ENCODE measurements at regions of chr3 and their contacts with region 1.

Region 1: GRCh38 chr3:56801662-56802377 is at the start of gene ARHGEF3:
- DNase-seq: peak; percentile 49 to 93
- H3K4me3 ChIP-seq: peak within 1 kb of the TSS; percentile 31 to 79 (median 76)
- H3K27ac ChIP-seq: no peak within 1 kb of the TSS
- H3K4me1 ChIP-seq: peaks cover 0 to 9% (median 3%) of the 10 kb centered on the region in 4 experiments; a peak in 4 of 7 replicates
- H3K27me3 ChIP-seq: peaks cover 0 to 11% (median 7%) of the 10 kb centered on the region in 4 experiments; a peak in 3 of 7 replicates
- CTCF ChIP-seq: peak; percentile 61 to 70 (median 66)
- EP300 ChIP-seq: no peak
- POLR2A ChIP-seq: peak; percentile 66 to 72
- RAD21 ChIP-seq: peak; percentile 52 to 74
- total RNA-seq, gene ARHGEF3: 6.0 and 7.7 TPM in 2 replicates

Region 2: DNA sequence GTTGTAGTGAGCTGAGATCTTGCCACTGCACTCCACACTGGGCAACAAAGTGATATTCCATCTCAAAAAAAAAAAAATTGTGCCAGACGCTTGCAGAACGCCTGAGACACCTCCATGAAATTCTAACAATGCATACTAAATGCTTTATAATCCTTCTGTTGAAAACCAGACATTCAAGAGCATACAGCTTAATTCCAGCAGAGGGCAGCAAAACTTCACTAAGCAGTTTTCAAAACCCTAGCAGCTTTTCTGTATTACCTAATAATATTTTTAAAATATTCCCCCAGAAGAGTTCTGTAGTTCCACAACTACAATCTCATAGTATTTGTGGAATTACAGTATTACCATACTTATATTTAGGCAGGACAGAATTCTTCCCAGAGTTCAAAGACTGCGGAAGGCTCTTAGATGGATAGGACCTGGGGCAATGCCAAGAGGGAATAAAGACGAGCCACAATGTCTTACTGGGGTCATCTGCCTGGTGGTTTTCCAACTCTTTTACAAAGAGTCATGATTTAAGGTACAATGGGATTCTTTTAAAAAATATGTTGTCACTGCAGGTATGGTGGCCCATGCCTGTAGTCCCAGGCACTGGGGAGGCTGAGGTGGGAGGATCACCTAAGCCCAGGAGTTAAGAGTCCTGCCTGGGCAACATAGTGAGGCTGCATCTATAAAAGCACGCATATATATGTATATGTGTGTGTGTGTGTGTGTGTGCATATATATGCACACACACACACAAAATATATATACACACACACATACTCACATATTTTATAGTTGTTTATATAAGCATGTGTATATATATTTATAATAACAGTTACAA is 99.1 kb before region 1 on chr3:
- CTCF ChIA-PET with region 1: interaction called, 81 read pairs
- POLR2A ChIA-PET with region 1: no interaction called
- DNase-seq: no peak
- H3K4me3 ChIP-seq: no peak overlapping the region
- H3K27ac ChIP-seq: no peak overlapping the region
- H3K4me1 ChIP-seq: no peaks in the 10 kb centered on the region
- H3K27me3 ChIP-seq: no peaks in the 10 kb centered on the region
- CTCF ChIP-seq: peak in 2 of 3 experiments; percentile 56 to 68; a peak in 2 of 4 replicates
- EP300 ChIP-seq: no peak
- POLR2A ChIP-seq: no peak
- RAD21 ChIP-seq: peak; percentile 88

Region 3: DNA sequence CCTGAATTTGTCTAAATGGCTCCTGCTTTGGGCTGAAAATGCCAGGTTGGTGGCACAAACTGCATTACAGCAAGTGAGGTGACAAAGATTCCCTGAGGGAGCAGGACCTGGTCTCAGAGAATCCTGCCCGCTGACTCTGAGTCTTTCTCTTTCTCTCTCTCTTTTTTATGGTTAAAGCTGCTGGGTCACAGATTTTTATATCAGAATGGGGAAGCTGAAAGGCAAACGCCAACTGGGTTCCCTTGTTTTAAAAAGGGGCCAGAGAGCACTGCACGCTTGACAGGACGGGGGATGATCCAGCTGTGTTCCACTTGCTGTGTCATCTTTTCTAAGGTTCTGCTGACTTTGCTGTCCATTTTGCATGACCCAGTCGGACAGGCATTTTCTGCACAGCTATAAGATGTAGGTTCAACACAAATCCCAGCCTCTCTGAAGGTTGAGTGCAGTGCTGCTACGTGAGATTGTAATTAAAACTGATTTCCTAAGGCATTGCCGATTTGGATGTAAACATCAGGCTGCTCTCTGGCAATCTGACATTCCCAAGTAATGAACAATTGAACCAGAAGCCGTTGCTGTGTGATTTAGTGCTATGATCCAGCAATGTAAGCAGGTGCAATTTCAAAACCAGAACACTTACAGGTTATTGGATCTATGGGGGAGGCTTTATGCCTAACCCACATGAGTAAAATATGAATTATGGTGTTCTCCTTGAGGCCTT is 25.8 kb before region 1 on chr3:
- CTCF ChIA-PET with region 1: interaction called, 45 read pairs
- POLR2A ChIA-PET with region 1: no interaction called
- DNase-seq: no peak
- H3K4me3 ChIP-seq: no peak overlapping the region
- H3K27ac ChIP-seq: no peak overlapping the region
- H3K4me1 ChIP-seq: no peaks in the 10 kb centered on the region
- H3K27me3 ChIP-seq: no peaks in the 10 kb centered on the region
- CTCF ChIP-seq: no peak
- EP300 ChIP-seq: no peak
- POLR2A ChIP-seq: no peak
- RAD21 ChIP-seq: no peak

Region 4: DNA sequence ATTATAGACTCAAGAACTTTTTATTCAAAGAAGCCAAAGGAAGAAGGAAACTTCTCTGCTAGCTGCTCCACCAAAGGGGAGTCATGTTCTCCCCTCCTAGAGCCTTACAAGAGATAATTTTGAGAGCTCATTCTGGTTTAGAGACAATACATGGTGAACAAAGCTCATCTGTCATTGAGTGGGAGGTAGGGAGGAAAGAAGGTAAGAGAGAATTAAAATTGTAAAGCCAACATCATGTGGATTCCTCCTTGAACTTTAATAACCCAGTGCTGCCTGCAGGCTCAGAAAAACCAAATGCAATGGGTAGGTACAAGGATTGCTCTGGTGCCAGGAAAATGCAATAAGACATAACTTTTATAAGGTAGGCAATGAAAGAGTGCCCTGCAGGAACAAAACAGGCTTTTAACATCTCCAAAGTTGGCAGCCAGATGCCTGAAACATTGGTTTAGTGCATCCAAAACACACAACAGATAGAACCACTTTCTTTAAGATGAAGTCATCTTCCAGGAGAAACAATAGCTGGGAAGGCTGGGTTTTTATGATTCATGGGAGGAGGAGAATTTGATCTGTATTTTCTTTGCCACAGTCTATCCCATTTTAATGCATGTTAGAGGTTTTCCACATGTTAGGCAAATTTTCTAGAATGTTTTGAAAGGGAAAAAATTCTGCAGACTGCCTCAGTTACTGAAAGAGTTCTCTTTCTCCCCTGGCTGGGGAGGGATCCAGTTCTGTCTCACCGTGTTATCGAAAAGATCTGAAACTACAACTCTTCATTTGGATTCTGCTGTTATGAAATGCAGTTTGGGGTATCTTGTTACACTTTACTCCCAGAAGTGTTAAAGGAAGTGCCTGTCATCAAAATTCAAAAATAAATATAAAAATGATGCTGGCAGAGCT is 11.2 kb after region 1 on chr3:
- CTCF ChIA-PET with region 1: interaction called, 92 read pairs
- POLR2A ChIA-PET with region 1: interaction called, 5 read pairs
- DNase-seq: no peak
- H3K4me3 ChIP-seq: no peak overlapping the region
- H3K27ac ChIP-seq: no peak overlapping the region
- H3K4me1 ChIP-seq: no peaks in the 10 kb centered on the region
- H3K27me3 ChIP-seq: no peaks in the 10 kb centered on the region
- CTCF ChIP-seq: no peak
- EP300 ChIP-seq: no peak
- POLR2A ChIP-seq: no peak
- RAD21 ChIP-seq: no peak

Region 5: GRCh38 chr3:56837196-56837955 is 35.6 kb after region 1 on chr3:
- CTCF ChIA-PET with region 1: interaction called, 10 read pairs
- POLR2A ChIA-PET with region 1: no interaction called
- DNase-seq: no peak
- H3K4me3 ChIP-seq: no peak overlapping the region
- H3K27ac ChIP-seq: no peak overlapping the region
- H3K4me1 ChIP-seq: no peaks in the 10 kb centered on the region
- H3K27me3 ChIP-seq: no peaks in the 10 kb centered on the region
- CTCF ChIP-seq: no peak
- EP300 ChIP-seq: no peak
- POLR2A ChIP-seq: no peak
- RAD21 ChIP-seq: no peak

Region 6: DNA sequence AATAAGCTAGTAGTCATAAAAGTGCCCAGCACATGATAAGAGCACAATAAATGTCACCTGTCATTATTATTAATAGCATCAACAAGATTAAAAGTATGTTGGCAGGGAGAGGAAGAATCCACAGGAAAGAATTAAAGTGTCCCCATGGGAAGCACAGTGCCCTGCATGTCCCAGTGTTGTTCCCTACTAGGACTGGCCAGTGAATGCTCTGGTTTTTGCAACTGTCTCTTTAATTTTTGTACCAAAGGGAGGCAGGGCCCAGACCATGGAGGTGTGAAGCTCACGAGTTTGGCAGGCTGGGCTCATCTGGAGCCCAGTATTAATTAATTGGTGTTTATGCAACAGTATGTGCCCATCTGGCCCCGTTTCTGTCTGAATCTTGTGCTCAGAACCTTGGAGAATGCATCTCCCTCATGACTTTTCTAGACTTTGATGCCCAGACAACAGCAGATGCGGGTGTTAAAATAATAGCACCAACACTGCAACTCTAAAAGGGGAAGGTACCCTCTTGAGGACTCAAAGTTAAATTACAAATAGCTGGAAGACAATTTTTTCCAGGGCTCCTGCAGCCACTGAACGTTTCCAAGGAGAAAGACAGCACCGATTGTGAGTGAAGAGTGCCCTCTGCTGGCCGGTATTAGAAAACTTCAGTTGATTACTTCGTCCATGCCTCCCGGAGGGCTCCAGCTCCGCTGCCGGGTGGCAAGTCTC is 186.8 kb after region 1 on chr3:
- CTCF ChIA-PET with region 1: interaction called, 61 read pairs
- POLR2A ChIA-PET with region 1: interaction called, 4 read pairs
- DNase-seq: peak; percentile 36 to 88
- H3K4me3 ChIP-seq: 0 out of 8 replicates have a peak overlapping the region, but pooled peaks of 1 of the 4 experiments have one; percentile 14
- H3K27ac ChIP-seq: no peak overlapping the region
- H3K4me1 ChIP-seq: peaks cover 0 to 12% (median 3%) of the 10 kb centered on the region in 4 experiments; a peak in 5 of 7 replicates
- H3K27me3 ChIP-seq: no peaks in the 10 kb centered on the region
- CTCF ChIP-seq: peak; percentile 47 to 89 (median 69)
- EP300 ChIP-seq: no peak
- POLR2A ChIP-seq: no peak
- RAD21 ChIP-seq: peak; percentile 96 to 97

Measured in H1 (cell line).